IMR-90 (cell line): ENCODE measurements at regions of chr9 and their contacts with region 1.

Region 1: GRCh38 chr9:96449845-96450612 is at the start of gene HABP4:
- DNase-seq: peak; percentile 91
- ATAC-seq: peak; percentile 96
- H3K4me3 ChIP-seq: peak within 1 kb of the TSS; percentile 97
- H3K27ac ChIP-seq: peak within 1 kb of the TSS; percentile 74
- H3K4me1 ChIP-seq: peaks cover 5% of the 10 kb centered on the region; the same call in 1 of the 2 replicates
- H3K27me3 ChIP-seq: no peaks in the 10 kb centered on the region
- CTCF ChIP-seq: no peak
- POLR2A ChIP-seq: peak; percentile 76
- RAD21 ChIP-seq: no peak
- total RNA-seq, gene HABP4: 5.2 and 10.3 TPM in 2 replicates

Region 2: GRCh38 chr9:95989297-95989696 is 460.7 kb before region 1 on chr9:
- CTCF ChIA-PET with region 1: no interaction called
- POLR2A ChIA-PET with region 1: no interaction called
- dilution Hi-C with region 1: no loop called
- in situ Hi-C with region 1: no loop called
- intact Hi-C with region 1: no loop called
- DNase-seq: peak; percentile 53
- ATAC-seq: peak; percentile 62; the same call in 1 of the 2 replicates
- H3K4me3 ChIP-seq: no peak overlapping the region
- H3K27ac ChIP-seq: no peak overlapping the region
- H3K4me1 ChIP-seq: no peaks in the 10 kb centered on the region
- H3K27me3 ChIP-seq: no peaks in the 10 kb centered on the region
- CTCF ChIP-seq: no peak
- POLR2A ChIP-seq: no peak
- RAD21 ChIP-seq: no peak

Region 3: GRCh38 chr9:96327694-96328352 is 122.2 kb before region 1 on chr9:
- CTCF ChIA-PET with region 1: no interaction called
- POLR2A ChIA-PET with region 1: no interaction called
- dilution Hi-C with region 1: no loop called
- in situ Hi-C with region 1: no loop called
- intact Hi-C with region 1: loop called (anchors 2 kb)
- DNase-seq: peak; percentile 59
- ATAC-seq: peak; percentile 100
- H3K4me3 ChIP-seq: no peak overlapping the region
- H3K27ac ChIP-seq: no peak overlapping the region
- H3K4me1 ChIP-seq: no peaks in the 10 kb centered on the region
- H3K27me3 ChIP-seq: no peaks in the 10 kb centered on the region
- CTCF ChIP-seq: peak; percentile 88
- POLR2A ChIP-seq: no peak
- RAD21 ChIP-seq: peak; percentile 82

Region 4: DNA sequence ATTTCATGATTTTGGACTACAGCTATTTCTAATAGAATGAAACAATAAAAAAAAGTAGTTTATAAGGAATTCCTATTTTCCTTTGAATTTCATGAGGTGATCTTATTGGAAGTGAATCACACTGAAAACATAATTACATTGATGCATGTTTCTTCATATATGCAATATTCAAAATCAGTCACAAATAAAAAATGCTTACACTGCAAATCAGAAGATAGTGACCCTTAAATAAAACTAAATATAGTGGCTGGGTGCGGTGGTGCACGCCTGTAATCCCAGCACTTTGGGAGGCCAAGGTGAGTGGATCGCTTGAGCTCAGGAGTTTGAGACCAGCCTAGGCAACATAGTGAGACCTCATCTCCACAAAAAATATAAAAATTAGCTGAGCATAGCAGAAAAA is 90.1 kb after region 1 on chr9:
- CTCF ChIA-PET with region 1: no interaction called
- POLR2A ChIA-PET with region 1: interaction called, 12 read pairs
- dilution Hi-C with region 1: no loop called
- in situ Hi-C with region 1: no loop called
- intact Hi-C with region 1: no loop called
- DNase-seq: no peak
- ATAC-seq: no peak
- H3K4me3 ChIP-seq: no peak overlapping the region
- H3K27ac ChIP-seq: no peak overlapping the region
- H3K4me1 ChIP-seq: no peaks in the 10 kb centered on the region
- H3K27me3 ChIP-seq: no peaks in the 10 kb centered on the region
- CTCF ChIP-seq: no peak
- POLR2A ChIP-seq: no peak
- RAD21 ChIP-seq: no peak

Region 5: DNA sequence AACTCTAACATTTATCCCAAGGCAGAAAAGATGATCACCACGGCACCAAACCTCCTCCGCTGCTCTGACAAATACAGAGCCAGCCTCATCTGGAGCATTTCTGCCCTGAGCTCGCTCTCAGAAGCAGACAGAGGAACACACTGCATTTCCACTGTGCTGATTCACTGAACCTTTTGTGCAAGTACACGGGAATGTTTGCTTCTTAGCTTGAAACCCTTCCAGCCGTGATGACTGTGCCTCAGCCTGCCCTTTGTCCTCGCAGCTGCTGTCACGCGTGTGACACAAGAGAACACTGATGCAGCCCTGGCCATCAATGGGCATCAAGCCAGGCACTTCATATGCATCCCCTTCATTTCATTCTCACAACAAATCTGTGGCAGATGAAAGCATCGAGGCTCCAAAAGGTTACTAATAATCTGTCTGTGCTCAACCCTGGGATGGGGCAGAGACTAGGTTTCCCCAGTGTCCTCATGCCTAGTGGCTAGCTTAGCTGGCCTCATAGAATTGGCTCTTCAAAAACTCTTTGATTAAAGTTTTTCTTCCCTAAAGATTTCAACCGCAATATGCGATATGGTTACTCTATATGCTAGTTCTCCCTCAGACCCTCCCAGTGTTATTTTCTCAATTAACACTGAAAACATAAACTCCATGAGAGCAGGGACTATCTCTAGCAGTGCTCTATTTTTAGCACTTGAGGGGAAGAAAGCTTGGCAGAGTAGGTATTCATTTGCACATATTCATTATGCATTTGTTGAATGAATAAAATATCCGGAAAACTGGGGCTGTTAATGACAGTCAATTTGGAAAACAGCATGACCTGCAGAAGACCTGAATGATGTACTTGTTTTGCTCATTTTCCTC is 162.3 kb after region 1 on chr9:
- CTCF ChIA-PET with region 1: no interaction called
- POLR2A ChIA-PET with region 1: no interaction called
- dilution Hi-C with region 1: no loop called
- in situ Hi-C with region 1: no loop called
- intact Hi-C with region 1: loop called (anchors 5 kb)
- DNase-seq: peak; percentile 96
- ATAC-seq: peak; percentile 93
- H3K4me3 ChIP-seq: peak overlapping the region; percentile 0; the same call in 1 of the 2 replicates
- H3K27ac ChIP-seq: peak overlapping the region; percentile 4; the same call in 1 of the 2 replicates
- H3K4me1 ChIP-seq: peaks cover 8% of the 10 kb centered on the region
- H3K27me3 ChIP-seq: no peaks in the 10 kb centered on the region
- CTCF ChIP-seq: no peak
- POLR2A ChIP-seq: peak; percentile 68; the same call in 1 of the 2 replicates
- RAD21 ChIP-seq: 0 out of 2 replicates have a peak, but pooled peaks have one; percentile 23

Region 6: DNA sequence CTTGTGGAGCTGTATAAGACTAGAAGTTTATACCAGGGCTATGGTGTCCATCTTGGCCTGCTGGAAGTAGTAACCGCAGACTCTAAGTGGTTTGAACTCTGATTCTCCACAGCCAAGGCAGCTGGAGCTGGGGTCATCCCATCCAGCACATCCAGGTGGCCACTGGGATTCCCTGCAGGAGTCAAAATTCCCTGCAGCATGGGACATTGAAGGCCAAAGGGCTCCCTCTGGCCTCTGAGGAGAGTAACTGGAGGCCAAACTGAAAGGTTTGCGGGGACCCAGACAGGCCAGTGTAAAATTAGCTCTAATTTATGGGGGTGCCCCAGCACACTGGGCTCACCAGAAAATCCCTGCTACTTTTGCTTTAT is 217.3 kb after region 1 on chr9:
- CTCF ChIA-PET with region 1: no interaction called
- POLR2A ChIA-PET with region 1: no interaction called
- dilution Hi-C with region 1: no loop called
- in situ Hi-C with region 1: no loop called
- intact Hi-C with region 1: loop called (anchors 5 kb)
- DNase-seq: no peak
- ATAC-seq: no peak
- H3K4me3 ChIP-seq: no peak overlapping the region
- H3K27ac ChIP-seq: no peak overlapping the region
- H3K4me1 ChIP-seq: no peaks in the 10 kb centered on the region
- H3K27me3 ChIP-seq: no peaks in the 10 kb centered on the region
- CTCF ChIP-seq: no peak
- POLR2A ChIP-seq: no peak
- RAD21 ChIP-seq: no peak